Endothelial cell of umbilical vein (primary cell): ENCODE measurements at regions of chr2 and their contacts with region 1.

Region 1: GRCh38 chr2:216404010-216404618 is 8.2 kb upstream of the SMARCAL1 start:
- DNase-seq: peak; percentile 21
- H3K4me3 ChIP-seq: no peak overlapping the region
- H3K27ac ChIP-seq: no peak overlapping the region
- H3K4me1 ChIP-seq: no peaks in the 10 kb centered on the region
- H3K27me3 ChIP-seq: no peaks in the 10 kb centered on the region
- CTCF ChIP-seq: peak; percentile 72 to 75
- POLR2A ChIP-seq: no peak

Region 2: GRCh38 chr2:216114714-216115557 is 289.2 kb before region 1 on chr2:
- CTCF ChIA-PET with region 1: no interaction called
- POLR2A ChIA-PET with region 1: no interaction called
- dilution Hi-C with region 1: no loop called
- intact Hi-C with region 1: loop called (anchors 5 kb)
- DNase-seq: peak; percentile 100
- H3K4me3 ChIP-seq: peak overlapping the region; percentile 33 to 80 (median 35)
- H3K27ac ChIP-seq: peak overlapping the region; percentile 87
- H3K4me1 ChIP-seq: peaks cover 26% of the 10 kb centered on the region
- H3K27me3 ChIP-seq: no peaks in the 10 kb centered on the region
- CTCF ChIP-seq: peak; percentile 84 to 95
- POLR2A ChIP-seq: peak; percentile 86

Region 3: GRCh38 chr2:216215658-216216390 is 188.3 kb before region 1 on chr2:
- CTCF ChIA-PET with region 1: interaction called, 12 read pairs
- POLR2A ChIA-PET with region 1: no interaction called
- dilution Hi-C with region 1: no loop called
- intact Hi-C with region 1: no loop called
- DNase-seq: no peak
- H3K4me3 ChIP-seq: no peak overlapping the region
- H3K27ac ChIP-seq: no peak overlapping the region
- H3K4me1 ChIP-seq: peaks cover 32% of the 10 kb centered on the region
- H3K27me3 ChIP-seq: no peaks in the 10 kb centered on the region
- CTCF ChIP-seq: peak; percentile 20 to 23
- POLR2A ChIP-seq: no peak

Region 4: DNA sequence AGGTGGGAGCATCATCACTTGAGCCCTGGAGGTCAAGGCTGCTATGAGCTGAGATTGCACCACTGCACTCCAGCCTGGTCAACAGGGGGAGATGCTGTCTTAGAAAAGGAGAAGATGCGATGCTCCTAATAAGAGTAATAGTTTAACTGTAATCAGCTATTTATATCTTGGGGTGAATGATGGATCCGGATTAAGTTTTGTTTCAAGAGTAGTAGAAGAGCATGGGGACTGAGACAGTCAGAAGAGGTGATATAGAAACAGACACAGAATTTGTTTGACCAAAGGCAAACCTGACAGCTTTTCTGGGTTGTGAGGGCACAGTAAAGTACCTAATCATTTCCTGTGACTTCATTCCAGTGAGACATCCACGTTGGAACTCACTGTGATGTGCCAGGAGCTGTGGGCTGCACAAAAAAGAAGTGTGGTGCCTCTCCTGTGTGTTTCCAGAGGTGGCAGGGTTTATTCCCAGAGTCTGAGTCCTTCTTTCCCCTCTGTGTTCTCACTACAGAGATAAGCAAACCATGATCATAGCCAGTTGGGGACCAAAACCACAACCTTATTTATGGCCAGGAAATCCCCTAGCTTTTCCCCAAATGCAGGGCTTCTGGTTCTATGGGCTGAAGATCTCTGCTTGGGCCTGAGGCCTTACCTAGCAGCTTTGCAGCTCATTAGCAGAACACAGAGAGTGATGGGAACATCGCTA is 181.3 kb before region 1 on chr2:
- CTCF ChIA-PET with region 1: interaction called, 44 read pairs
- POLR2A ChIA-PET with region 1: no interaction called
- dilution Hi-C with region 1: no loop called
- intact Hi-C with region 1: loop called (anchors 2 kb)
- DNase-seq: peak; percentile 32
- H3K4me3 ChIP-seq: no peak overlapping the region
- H3K27ac ChIP-seq: no peak overlapping the region
- H3K4me1 ChIP-seq: peaks cover 30% of the 10 kb centered on the region
- H3K27me3 ChIP-seq: no peaks in the 10 kb centered on the region
- CTCF ChIP-seq: peak; percentile 9 to 26
- POLR2A ChIP-seq: no peak

Region 5: GRCh38 chr2:216308576-216308975 is 95.5 kb before region 1 on chr2:
- CTCF ChIA-PET with region 1: interaction called, 10 read pairs
- POLR2A ChIA-PET with region 1: no interaction called
- dilution Hi-C with region 1: no loop called
- intact Hi-C with region 1: no loop called
- DNase-seq: no peak
- H3K4me3 ChIP-seq: no peak overlapping the region
- H3K27ac ChIP-seq: no peak overlapping the region
- H3K4me1 ChIP-seq: peaks cover 10% of the 10 kb centered on the region
- H3K27me3 ChIP-seq: no peaks in the 10 kb centered on the region
- CTCF ChIP-seq: no peak
- POLR2A ChIP-seq: no peak

Region 6: DNA sequence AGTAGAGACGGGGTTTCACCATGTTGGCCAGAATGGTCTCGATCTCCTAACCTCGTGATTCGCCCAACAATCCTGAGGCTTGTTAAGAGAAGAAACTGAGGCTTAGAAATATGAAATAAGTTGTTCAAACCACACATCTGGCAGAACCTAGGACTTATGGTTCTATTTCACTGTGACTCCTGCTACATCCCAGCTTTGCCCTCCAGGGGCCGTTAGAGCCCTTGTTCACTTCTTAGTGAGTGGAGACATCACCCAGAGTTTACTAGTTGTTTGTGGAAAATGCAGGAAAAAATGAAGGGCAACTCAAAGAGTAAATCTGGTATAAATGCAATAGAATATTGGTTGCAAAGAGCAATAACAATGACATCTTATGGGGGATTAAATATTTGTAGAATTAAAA is 75.8 kb before region 1 on chr2:
- CTCF ChIA-PET with region 1: interaction called, 50 read pairs
- POLR2A ChIA-PET with region 1: no interaction called
- dilution Hi-C with region 1: no loop called
- intact Hi-C with region 1: loop called (anchors 1 kb)
- DNase-seq: peak; percentile 20
- H3K4me3 ChIP-seq: no peak overlapping the region
- H3K27ac ChIP-seq: no peak overlapping the region
- H3K4me1 ChIP-seq: no peaks in the 10 kb centered on the region
- H3K27me3 ChIP-seq: no peaks in the 10 kb centered on the region
- CTCF ChIP-seq: peak in 1 of 2 donors; percentile 9
- POLR2A ChIP-seq: no peak

Region 7: GRCh38 chr2:216618785-216619184 is 214.7 kb after region 1 on chr2:
- CTCF ChIA-PET with region 1: no interaction called
- POLR2A ChIA-PET with region 1: no interaction called
- dilution Hi-C with region 1: no loop called
- intact Hi-C with region 1: no loop called
- DNase-seq: no peak
- H3K4me3 ChIP-seq: no peak overlapping the region
- H3K27ac ChIP-seq: no peak overlapping the region
- H3K4me1 ChIP-seq: no peaks in the 10 kb centered on the region
- H3K27me3 ChIP-seq: peaks cover 3 to 5% of the 10 kb centered on the region in 2 experiments
- CTCF ChIP-seq: no peak
- POLR2A ChIP-seq: no peak